Sigmoid colon (tissue), 7 donors: ENCODE measurements at regions of chr13 and their contacts with region 1.

Region 1: GRCh38 chr13:113364311-113364889 is 470 bp upstream of the GRTP1 start:
- DNase-seq: peak; percentile 71
- H3K4me3 ChIP-seq: peak overlapping the region; percentile 55 to 92 (median 83)
- H3K27ac ChIP-seq: peak overlapping the region; percentile 74 to 86 (median 80)
- H3K4me1 ChIP-seq: peaks cover 3 to 24% (median 18%) of the 10 kb centered on the region in 4 donors
- H3K27me3 ChIP-seq: no peaks in the 10 kb centered on the region
- CTCF ChIP-seq: no peak
- EP300 ChIP-seq: no peak
- POLR2A ChIP-seq: peak; percentile 60 to 66

Region 2: GRCh38 chr13:113296842-113297369 is 67.5 kb before region 1 on chr13 and contains the start of gene LAMP1:
- intact Hi-C with region 1: loop called (anchors 2 kb)
- DNase-seq: peak; percentile 99
- H3K4me3 ChIP-seq: peak within 1 kb of the TSS; percentile 78 to 100 (median 94)
- H3K27ac ChIP-seq: peak within 1 kb of the TSS; percentile 79 to 90 (median 88)
- H3K4me1 ChIP-seq: peaks cover 0 to 32% (median 26%) of the 10 kb centered on the region in 4 donors
- H3K27me3 ChIP-seq: no peaks in the 10 kb centered on the region
- CTCF ChIP-seq: no peak
- EP300 ChIP-seq: peak in 3 of 4 donors; percentile 11 to 79 (median 66)
- POLR2A ChIP-seq: peak; percentile 29 to 55
- total RNA-seq, gene LAMP1: 77.3 to 91.0 (median 87.5) TPM

Region 3: DNA sequence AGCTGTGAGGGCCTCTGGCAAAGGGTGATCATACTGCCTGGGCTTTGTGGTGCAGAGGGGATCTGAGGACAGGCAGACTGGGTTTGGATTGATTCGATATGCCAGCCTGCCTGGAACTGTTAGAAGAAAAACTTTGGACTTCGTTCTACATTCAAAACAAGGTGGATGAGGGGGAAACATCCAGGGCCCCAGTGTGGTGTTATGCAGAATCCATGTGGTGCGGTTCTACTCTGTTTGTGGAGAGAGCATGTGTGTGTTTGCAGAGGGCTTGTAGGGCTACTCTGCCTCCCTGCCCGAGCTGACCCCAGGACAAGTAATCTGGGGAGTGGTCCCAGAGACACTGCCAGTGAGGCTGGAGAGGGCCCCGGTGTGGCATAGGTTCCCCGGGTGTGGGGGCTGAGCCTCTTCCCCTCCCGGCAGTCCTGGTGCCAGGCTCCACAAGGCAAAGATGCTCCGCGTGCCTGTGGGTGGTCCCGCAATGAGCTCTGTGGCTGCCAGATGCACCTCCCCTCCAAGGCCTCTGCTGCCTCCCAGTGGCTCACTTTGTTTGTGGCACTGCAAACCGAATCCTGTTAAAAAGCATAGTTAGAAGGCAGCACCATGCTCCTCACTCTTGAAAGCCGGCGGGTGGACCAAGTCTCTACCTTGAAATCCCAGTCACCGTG is 197.8 kb after region 1 on chr13:
- intact Hi-C with region 1: no loop called
- DNase-seq: no peak
- H3K4me3 ChIP-seq: no peak overlapping the region
- H3K27ac ChIP-seq: no peak overlapping the region
- H3K4me1 ChIP-seq: peaks cover 0 to 7% (median 5%) of the 10 kb centered on the region in 4 donors
- H3K27me3 ChIP-seq: no peaks in the 10 kb centered on the region
- CTCF ChIP-seq: peak; percentile 27 to 62 (median 52)
- EP300 ChIP-seq: no peak
- POLR2A ChIP-seq: no peak